ENCODE measurements at regions of chr3 and their contacts with region 1.

Region 1: DNA sequence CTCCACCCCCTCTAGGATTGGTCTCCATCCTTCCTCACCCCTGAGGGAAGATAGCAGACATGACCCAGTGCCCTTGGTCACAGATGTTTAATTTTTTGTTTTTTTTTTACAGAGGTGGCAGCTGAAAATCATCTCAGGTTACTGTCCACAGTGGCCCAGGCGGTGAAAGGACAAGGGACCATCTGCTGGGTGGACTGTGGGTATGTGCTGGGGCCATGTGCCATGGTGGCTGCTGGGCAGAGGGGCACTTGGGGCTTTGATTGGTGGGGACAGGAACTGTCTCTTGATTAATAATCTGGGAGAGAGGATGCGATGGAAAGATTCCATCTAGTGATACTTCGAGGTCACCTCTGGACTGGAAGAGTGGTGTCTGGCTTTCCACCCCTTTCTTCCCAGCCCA is 25.4 kb downstream of the PDIA5 start:
- DNase-seq: no peak
- ATAC-seq: no peak
- H3K4me3 ChIP-seq: no peak overlapping the region
- H3K27ac ChIP-seq: no peak overlapping the region
- H3K4me1 ChIP-seq: no peaks in the 10 kb centered on the region
- H3K27me3 ChIP-seq: no peaks in the 10 kb centered on the region
- CTCF ChIP-seq: no peak

Region 2: GRCh38 chr3:122890077-122890719 is 202.0 kb before region 1 on chr3:
- CTCF ChIA-PET with region 1: no interaction called
- POLR2A ChIA-PET with region 1: interaction called, 17 read pairs
- intact Hi-C with region 1: no loop called
- DNase-seq: peak; percentile 39
- ATAC-seq: no peak
- H3K4me3 ChIP-seq: no peak overlapping the region
- H3K27ac ChIP-seq: no peak overlapping the region
- H3K4me1 ChIP-seq: peaks cover 19% of the 10 kb centered on the region
- H3K27me3 ChIP-seq: no peaks in the 10 kb centered on the region
- CTCF ChIP-seq: no peak